IMR-90 (cell line): ENCODE measurements at regions of chr18 and their contacts with region 1.

Region 1: DNA sequence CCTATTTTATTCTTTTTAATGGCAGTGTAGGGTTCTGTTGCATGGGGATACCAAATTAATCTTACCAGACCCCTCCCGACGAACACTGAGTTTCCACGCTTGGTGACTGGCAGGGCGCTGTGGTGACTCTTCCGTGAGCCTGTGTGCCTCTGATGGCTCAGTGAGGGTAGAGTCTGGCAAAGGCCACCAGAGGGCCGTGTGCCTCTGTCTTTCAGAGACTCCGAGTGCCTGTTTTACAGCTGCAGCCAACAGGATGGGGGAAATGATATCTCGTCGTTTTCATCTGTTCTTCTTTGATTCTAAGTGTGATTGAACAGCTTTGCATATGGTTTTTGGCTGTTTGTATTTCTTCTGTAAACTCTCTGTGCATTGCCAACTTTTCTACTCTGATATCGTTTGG is 99.8 kb downstream of the ZNF236 start:
- DNase-seq: peak; percentile 58
- ATAC-seq: peak; percentile 93
- H3K4me3 ChIP-seq: no peak overlapping the region
- H3K27ac ChIP-seq: no peak overlapping the region
- H3K4me1 ChIP-seq: peaks cover 5% of the 10 kb centered on the region
- H3K27me3 ChIP-seq: no peaks in the 10 kb centered on the region
- CTCF ChIP-seq: peak; percentile 63
- POLR2A ChIP-seq: no peak
- RAD21 ChIP-seq: peak; percentile 68

Region 2: DNA sequence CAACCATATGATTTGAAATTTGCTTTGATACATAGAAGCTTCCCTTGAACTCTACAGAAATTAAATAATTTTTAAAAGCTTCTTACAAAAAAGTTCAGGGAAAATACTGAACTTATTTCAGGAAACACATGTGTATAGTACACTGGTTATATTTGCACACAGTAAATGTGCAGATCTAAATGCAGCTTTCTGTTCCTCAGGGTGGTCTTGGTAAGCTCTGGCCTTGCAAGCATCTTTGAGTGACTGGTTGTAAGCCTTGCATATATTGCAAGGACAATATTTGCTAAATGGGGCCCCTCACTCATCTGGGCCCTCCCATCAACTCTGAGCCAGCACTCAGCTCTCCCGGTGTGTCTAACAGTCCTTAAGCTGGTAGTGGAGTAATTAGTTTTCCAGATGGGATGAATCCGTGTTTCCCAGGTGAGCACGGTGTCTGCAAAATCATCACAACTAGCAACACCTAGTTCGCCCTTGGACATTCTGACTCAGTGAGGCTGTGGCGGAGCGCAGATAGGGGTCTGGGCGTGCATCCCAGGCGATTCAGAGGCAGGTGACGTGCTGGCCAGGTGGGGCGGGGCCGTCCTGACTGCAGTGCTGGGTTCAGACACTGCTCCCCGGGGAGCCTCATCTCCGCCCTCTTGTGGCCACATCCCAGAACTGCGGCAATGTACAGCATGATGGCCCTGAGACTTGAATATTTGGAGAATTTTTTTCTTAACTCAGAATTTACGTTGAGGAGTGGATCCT is 60.9 kb after region 1 on chr18:
- CTCF ChIA-PET with region 1: interaction called, 5 read pairs
- POLR2A ChIA-PET with region 1: no interaction called
- dilution Hi-C with region 1: no loop called
- in situ Hi-C with region 1: no loop called
- intact Hi-C with region 1: loop called (anchors 2 kb)
- DNase-seq: peak; percentile 67
- ATAC-seq: peak; percentile 100
- H3K4me3 ChIP-seq: no peak overlapping the region
- H3K27ac ChIP-seq: no peak overlapping the region
- H3K4me1 ChIP-seq: no peaks in the 10 kb centered on the region; the same call in 1 of the 2 replicates
- H3K27me3 ChIP-seq: peaks cover 4% of the 10 kb centered on the region
- CTCF ChIP-seq: peak; percentile 92
- POLR2A ChIP-seq: no peak
- RAD21 ChIP-seq: peak; percentile 71

Region 3: GRCh38 chr18:77054606-77055428 is 132.7 kb after region 1 on chr18:
- CTCF ChIA-PET with region 1: no interaction called
- POLR2A ChIA-PET with region 1: no interaction called
- dilution Hi-C with region 1: no loop called
- in situ Hi-C with region 1: no loop called
- intact Hi-C with region 1: loop called (anchors 1 kb)
- DNase-seq: peak; percentile 93
- ATAC-seq: peak; percentile 99
- H3K4me3 ChIP-seq: no peak overlapping the region; the same call in 1 of the 2 replicates
- H3K27ac ChIP-seq: peak overlapping the region; percentile 77
- H3K4me1 ChIP-seq: peaks cover 19% of the 10 kb centered on the region
- H3K27me3 ChIP-seq: no peaks in the 10 kb centered on the region
- CTCF ChIP-seq: peak; percentile 97
- POLR2A ChIP-seq: no peak
- RAD21 ChIP-seq: peak; percentile 82

Region 4: GRCh38 chr18:77068321-77069312 is 146.5 kb after region 1 on chr18:
- CTCF ChIA-PET with region 1: no interaction called
- POLR2A ChIA-PET with region 1: no interaction called
- dilution Hi-C with region 1: no loop called
- in situ Hi-C with region 1: no loop called
- intact Hi-C with region 1: no loop called
- DNase-seq: peak; percentile 75
- ATAC-seq: no peak
- H3K4me3 ChIP-seq: no peak overlapping the region
- H3K27ac ChIP-seq: peak overlapping the region; percentile 64
- H3K4me1 ChIP-seq: peaks cover 54% of the 10 kb centered on the region
- H3K27me3 ChIP-seq: no peaks in the 10 kb centered on the region
- CTCF ChIP-seq: no peak; the same call in 1 of the 2 replicates
- POLR2A ChIP-seq: no peak
- RAD21 ChIP-seq: peak; percentile 28

Region 5: DNA sequence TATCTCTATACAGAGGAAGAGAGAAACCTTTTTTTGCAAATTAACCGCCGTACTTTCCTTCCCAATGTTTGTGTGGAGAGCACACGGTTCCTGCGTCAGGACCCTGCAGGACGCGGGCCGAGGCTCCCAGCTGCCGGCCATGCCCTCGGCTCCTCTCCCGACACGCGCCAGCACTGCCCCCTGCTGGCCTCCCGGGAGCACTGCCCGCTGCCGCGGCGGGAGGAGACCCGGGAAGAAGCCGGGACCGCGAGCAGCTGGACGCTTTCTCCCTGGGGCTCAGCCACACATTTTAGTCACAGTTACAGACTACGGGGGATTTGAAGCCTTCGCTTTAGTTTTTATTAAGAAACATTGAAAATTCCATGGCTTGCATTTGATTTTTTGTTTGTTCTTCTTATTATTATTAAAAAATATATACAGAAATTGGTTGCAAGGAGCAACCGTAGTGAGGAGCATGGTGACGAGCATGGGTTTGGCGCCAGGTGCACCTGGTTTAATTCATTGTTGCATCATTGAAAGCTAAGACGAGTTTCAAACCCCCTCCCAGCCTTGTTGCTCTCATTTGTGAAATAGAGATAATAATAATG is 728.8 kb after region 1 on chr18:
- CTCF ChIA-PET with region 1: no interaction called
- POLR2A ChIA-PET with region 1: no interaction called
- dilution Hi-C with region 1: no loop called
- in situ Hi-C with region 1: no loop called
- intact Hi-C with region 1: loop called (anchors 5 kb)
- DNase-seq: no peak
- ATAC-seq: peak; percentile 70
- H3K4me3 ChIP-seq: no peak overlapping the region
- H3K27ac ChIP-seq: no peak overlapping the region
- H3K4me1 ChIP-seq: no peaks in the 10 kb centered on the region
- H3K27me3 ChIP-seq: no peaks in the 10 kb centered on the region
- CTCF ChIP-seq: peak; percentile 30
- POLR2A ChIP-seq: no peak
- RAD21 ChIP-seq: peak; percentile 33; the same call in 1 of the 2 replicates